Dendritic cell treated with granulocyte-macrophage colony-stimulating factor and Interleukin-4, amounts not matched to agents 40 ng/mL and 50 ng/mL, for 4 days (primary cell): ENCODE measurements at regions of chr12 and their contacts with region 1.

Region 1: DNA sequence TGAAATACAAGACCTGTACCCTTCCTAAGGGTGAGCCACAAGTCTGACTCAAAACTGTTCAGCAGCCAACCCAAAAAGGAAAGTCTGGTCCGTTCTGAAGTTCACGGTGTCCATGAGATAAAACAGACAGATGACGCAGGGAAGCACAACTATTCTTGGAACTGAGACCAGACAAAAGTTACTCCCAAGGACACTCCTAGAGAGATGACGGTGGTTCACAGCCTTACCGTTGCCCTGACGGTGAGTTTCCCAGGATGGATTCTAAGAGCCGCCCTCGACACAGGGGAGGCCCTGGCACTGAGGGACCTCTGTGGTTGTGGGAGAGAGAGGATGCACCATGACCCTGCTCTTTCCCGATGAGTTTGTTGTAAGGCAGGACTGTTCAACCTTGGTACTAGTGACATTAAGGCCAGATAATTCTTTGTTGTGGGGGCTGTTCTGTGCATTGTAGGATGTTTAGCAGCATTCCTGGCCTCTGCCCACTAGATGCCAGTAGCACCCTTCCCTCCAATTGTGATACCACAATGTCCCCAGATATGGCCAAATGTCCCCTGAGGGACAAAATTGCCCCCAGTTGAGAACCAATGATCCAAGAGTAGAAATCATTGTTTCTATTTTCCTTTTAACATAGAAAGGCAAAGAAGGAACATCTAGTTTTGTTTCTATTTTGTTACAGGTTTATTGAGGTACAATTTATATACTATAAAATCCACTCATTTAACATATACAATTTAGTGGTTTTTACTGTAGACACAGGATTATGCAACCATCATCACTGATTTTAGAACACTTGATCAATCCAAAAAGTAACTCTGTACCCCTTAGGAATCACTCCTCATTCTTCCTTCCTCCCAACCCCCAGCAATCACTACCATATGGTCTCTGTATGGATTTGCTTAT is 23.0 kb downstream of the OR10P1 start:
- H3K4me3 Mint-ChIP-seq: no peak overlapping the region
- H3K27ac Mint-ChIP-seq: no peak overlapping the region
- H3K4me1 Mint-ChIP-seq: peaks cover 16% of the 10 kb centered on the region
- H3K27me3 Mint-ChIP-seq: peaks cover 6% of the 10 kb centered on the region

Region 2: DNA sequence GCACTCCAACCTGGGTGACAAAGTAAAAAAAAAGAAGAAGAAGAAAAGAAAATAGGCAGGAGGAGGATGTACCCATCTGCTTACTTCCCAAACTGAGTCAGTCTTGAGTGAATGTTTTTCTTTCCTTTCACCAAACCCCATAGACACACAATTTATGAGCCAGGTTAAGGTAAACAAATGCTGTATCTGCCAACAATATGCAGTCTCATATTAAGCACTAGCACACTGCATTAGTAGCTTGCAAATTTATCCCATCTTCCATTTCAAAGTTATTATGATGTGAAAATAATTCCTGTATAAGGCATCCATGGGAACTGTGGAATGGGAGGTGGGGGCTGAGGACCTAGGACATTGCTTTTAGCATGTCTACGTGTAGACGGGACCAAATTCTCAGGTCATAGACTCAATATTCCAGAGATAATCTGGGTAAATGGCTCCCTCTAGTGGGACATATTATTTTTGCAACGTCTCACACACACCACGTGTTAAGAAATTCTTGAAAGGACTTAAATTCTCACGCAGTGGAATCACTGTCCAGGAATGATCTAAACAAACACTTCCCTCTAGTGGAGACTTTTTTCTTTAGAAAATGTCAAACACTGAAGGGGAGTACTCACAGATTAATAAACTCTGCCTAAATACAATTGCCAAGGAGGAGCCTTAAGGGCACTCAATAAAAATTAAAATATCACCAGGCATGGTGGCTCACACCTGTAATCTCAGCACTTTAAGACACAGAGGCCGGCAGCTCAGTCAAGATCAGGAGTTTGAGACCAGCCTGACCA is 40.2 kb before region 1 on chr12:
- intact Hi-C with region 1: loop called (anchors 5 kb)
- H3K4me3 Mint-ChIP-seq: no peak overlapping the region
- H3K27ac Mint-ChIP-seq: no peak overlapping the region
- H3K4me1 Mint-ChIP-seq: peaks cover 8% of the 10 kb centered on the region
- H3K27me3 Mint-ChIP-seq: peaks cover 12% of the 10 kb centered on the region

Region 3: DNA sequence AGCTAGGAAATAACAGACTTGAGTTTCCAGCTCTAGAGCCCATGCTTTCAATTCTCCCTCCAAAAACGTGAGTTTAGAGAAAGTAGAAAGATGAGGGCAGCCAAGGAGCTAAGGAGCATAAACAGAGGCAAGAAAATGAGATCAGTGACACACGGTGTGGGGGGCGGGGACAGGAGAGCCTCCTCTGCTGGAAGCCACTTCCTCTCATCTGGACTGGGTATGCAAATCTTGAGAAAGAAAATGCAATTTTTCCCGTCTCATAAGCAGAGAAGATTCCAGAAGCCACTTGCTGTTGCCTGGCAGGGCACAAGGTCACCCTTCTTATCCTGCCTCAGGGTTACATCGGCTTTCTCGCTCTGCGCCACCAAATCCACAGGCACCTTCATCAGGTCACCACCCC is 17.1 kb before region 1 on chr12:
- intact Hi-C with region 1: loop called (anchors 1 kb)
- H3K4me3 Mint-ChIP-seq: no peak overlapping the region
- H3K27ac Mint-ChIP-seq: peak overlapping the region; percentile 74
- H3K4me1 Mint-ChIP-seq: peaks cover 71% of the 10 kb centered on the region
- H3K27me3 Mint-ChIP-seq: peaks cover 2% of the 10 kb centered on the region

Region 4: GRCh38 chr12:55681142-55682077 is 21.7 kb after region 1 on chr12:
- intact Hi-C with region 1: no loop called
- H3K4me3 Mint-ChIP-seq: peak overlapping the region; percentile 48
- H3K27ac Mint-ChIP-seq: peak overlapping the region; percentile 63
- H3K4me1 Mint-ChIP-seq: peaks cover 22% of the 10 kb centered on the region
- H3K27me3 Mint-ChIP-seq: peaks cover 10% of the 10 kb centered on the region

Region 5: DNA sequence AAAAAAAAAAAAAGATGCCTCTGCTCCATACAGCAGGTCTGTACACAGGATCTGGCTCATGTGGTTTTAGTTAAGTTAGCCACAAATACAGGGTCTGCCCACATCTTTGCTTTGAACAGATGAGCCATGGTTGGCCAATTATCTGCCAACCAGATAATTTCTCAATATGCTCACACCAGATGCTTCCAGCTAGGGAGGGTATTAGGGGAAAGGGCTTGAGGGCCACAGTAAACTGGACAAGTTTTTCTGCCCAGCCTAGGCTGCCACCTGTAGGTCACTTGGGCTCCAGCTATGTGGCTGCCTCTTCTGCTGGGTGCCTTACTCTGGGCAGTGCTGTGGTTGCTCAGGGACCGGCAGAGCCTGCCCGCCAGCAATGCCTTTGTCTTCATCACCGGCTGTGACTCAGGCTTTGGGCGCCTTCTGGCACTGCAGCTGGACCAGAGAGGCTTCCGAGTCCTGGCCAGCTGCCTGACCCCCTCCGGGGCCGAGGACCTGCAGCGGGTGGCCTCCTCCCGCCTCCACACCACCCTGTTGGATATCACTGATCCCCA is 61.2 kb after region 1 on chr12:
- intact Hi-C with region 1: loop called (anchors 1 kb)
- H3K4me3 Mint-ChIP-seq: no peak overlapping the region
- H3K27ac Mint-ChIP-seq: no peak overlapping the region
- H3K4me1 Mint-ChIP-seq: peaks cover 64% of the 10 kb centered on the region
- H3K27me3 Mint-ChIP-seq: no peaks in the 10 kb centered on the region